Heart right ventricle (tissue), 16 donors: ENCODE measurements at regions of chr13 and their contacts with region 1.

Region 1: DNA sequence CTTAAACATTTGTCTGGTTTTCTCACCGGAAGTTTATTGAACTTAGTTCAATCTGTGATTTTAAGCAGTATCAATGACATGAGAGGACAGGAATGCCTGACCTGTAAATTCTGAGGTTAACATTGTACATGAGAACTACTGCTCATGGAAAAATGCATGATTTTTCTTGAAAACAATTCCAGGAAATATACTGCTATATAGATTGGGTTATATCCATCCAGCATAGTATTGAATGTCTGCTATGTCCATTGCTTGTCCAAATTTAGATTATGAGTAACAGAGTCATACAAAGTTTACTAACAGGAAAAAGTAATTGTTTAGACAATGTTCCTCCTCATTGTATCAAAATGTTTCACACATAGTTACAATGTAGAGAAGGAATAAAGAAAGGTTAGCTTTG is 606.8 kb downstream of the DACH1 start:
- DNase-seq: no peak
- ATAC-seq: no peak
- H3K4me3 ChIP-seq: no peak overlapping the region
- H3K27ac ChIP-seq: no peak overlapping the region
- H3K4me1 ChIP-seq: peaks cover 0 to 2% (median 0%) of the 10 kb centered on the region in 9 donors
- H3K27me3 ChIP-seq: no peaks in the 10 kb centered on the region
- CTCF ChIP-seq: no peak

Region 2: GRCh38 chr13:71021825-71022422 is 238.3 kb before region 1 on chr13:
- intact Hi-C with region 1: no loop called
- DNase-seq: no peak
- ATAC-seq: no peak
- H3K4me3 ChIP-seq: no peak overlapping the region
- H3K27ac ChIP-seq: no peak overlapping the region
- H3K4me1 ChIP-seq: no peaks in the 10 kb centered on the region
- H3K27me3 ChIP-seq: no peaks in the 10 kb centered on the region
- CTCF ChIP-seq: no peak

Region 3: DNA sequence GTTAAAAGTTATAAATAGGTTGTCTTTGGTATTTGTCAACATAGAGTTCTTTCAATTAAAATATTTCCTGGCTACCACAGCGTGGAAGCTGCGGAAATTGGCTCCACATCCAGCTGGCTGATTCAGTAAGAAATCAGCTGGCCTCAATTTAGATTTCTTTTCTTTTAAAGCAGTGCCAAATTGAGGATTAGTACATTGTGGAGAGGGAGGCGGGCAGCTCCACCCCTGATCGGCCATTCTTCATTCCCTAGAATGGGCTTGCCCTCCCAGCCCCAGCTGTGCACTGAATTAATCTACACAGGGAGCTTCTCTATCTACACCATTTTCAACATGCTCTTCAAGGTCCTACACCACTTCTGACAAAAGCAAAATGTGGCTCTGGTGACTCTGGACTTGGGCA is 18.0 kb before region 1 on chr13:
- intact Hi-C with region 1: no loop called
- DNase-seq: peak in 1 of 2 donors; percentile 8
- ATAC-seq: peak in 7 of 8 donors; percentile 17 to 64 (median 50)
- H3K4me3 ChIP-seq: no peak overlapping the region
- H3K27ac ChIP-seq: peak overlapping the region in 2 of 10 donors; percentile 39 to 46
- H3K4me1 ChIP-seq: peaks cover 0 to 35% (median 8%) of the 10 kb centered on the region in 9 donors
- H3K27me3 ChIP-seq: no peaks in the 10 kb centered on the region
- CTCF ChIP-seq: no peak

Region 4: GRCh38 chr13:71399631-71400215 is 139.5 kb after region 1 on chr13:
- intact Hi-C with region 1: loop called in 1 of 10 experiments (anchors 10 kb)
- DNase-seq: no peak
- ATAC-seq: no peak
- H3K4me3 ChIP-seq: no peak overlapping the region
- H3K27ac ChIP-seq: no peak overlapping the region
- H3K4me1 ChIP-seq: peaks cover 0 to 7% (median 0%) of the 10 kb centered on the region in 9 donors
- H3K27me3 ChIP-seq: no peaks in the 10 kb centered on the region
- CTCF ChIP-seq: no peak